AG04450 (cell line): ENCODE measurements at regions of chr4 and their contacts with region 1.

Region 1: GRCh38 chr4:119628308-119629141 is at the start of gene PDE5A:
- DNase-seq: peak; percentile 63
- H3K4me3 ChIP-seq: peak within 1 kb of the TSS; percentile 85
- H3K27ac ChIP-seq: peak within 1 kb of the TSS; percentile 94
- H3K27me3 ChIP-seq: no peaks in the 10 kb centered on the region
- CTCF ChIP-seq: peak; percentile 69
- polyA plus RNA-seq, gene PDE5A: 411 and 489 TPM in 2 replicates

Region 2: GRCh38 chr4:119559044-119559647 is 69.4 kb before region 1 on chr4:
- CTCF ChIA-PET with region 1: interaction called, 19 read pairs
- POLR2A ChIA-PET with region 1: interaction called, 3 read pairs
- DNase-seq: no peak
- H3K4me3 ChIP-seq: no peak overlapping the region
- H3K27ac ChIP-seq: no peak overlapping the region
- H3K27me3 ChIP-seq: no peaks in the 10 kb centered on the region
- CTCF ChIP-seq: peak; percentile 45

Region 3: GRCh38 chr4:119652998-119653397 is 24.5 kb after region 1 on chr4:
- CTCF ChIA-PET with region 1: interaction called, 14 read pairs
- POLR2A ChIA-PET with region 1: interaction called, 3 read pairs
- DNase-seq: peak; percentile 70
- H3K4me3 ChIP-seq: no peak overlapping the region
- H3K27ac ChIP-seq: no peak overlapping the region
- H3K27me3 ChIP-seq: no peaks in the 10 kb centered on the region
- CTCF ChIP-seq: no peak

Region 4: DNA sequence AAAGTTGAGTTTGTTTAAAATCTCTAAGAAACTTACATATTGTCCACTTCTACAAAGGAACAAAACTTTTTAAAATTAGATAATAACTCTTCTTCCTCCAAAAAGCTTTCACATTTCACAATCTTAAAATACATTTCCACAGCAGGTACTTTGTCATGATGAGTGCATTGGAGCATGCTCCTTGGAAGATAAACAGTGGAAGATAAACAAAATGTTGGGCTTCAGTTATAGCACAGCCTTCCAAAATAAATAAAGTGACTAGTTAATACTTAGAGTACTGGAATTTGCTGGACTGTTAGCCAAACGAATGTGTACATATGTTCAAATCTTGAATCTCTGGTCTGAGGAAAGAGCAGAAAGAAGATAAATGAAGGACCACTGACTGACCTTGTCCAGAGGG is 55.0 kb after region 1 on chr4:
- CTCF ChIA-PET with region 1: interaction called, 55 read pairs
- POLR2A ChIA-PET with region 1: interaction called, 17 read pairs
- DNase-seq: peak; percentile 72
- H3K4me3 ChIP-seq: no peak overlapping the region
- H3K27ac ChIP-seq: no peak overlapping the region
- H3K27me3 ChIP-seq: no peaks in the 10 kb centered on the region
- CTCF ChIP-seq: no peak

Region 5: DNA sequence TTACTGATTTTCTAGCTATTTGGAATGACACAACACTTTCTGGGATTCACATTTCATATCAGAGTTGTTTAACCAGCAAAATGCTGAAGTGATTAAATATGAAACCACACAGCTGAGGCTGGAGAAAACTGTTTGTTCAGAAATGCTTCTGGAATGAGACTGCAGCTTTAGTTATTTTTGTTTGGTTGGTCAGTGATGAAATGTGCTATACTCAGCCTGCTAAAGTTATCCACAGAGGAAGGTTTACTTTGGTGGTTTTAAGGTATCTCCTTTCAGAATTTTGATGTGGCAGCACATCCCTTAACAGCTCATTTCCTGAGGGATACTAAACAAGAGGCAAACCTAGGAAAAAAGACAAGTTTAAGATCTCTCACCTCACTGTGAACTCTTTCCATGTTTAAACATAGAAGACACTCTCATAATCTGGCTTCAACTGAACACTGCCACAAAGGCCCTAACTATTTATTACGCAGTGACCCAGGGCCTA is 106.7 kb after region 1 on chr4:
- CTCF ChIA-PET with region 1: interaction called, 13 read pairs
- POLR2A ChIA-PET with region 1: interaction called, 60 read pairs
- DNase-seq: peak; percentile 97
- H3K4me3 ChIP-seq: no peak overlapping the region
- H3K27ac ChIP-seq: no peak overlapping the region
- H3K27me3 ChIP-seq: no peaks in the 10 kb centered on the region
- CTCF ChIP-seq: no peak

Region 6: GRCh38 chr4:120049732-120050494 is 421.4 kb after region 1 on chr4:
- CTCF ChIA-PET with region 1: interaction called, 175 read pairs
- POLR2A ChIA-PET with region 1: interaction called, 19 read pairs
- DNase-seq: peak; percentile 78
- H3K4me3 ChIP-seq: peak overlapping the region; percentile 31
- H3K27ac ChIP-seq: peak overlapping the region; percentile 71
- H3K27me3 ChIP-seq: no peaks in the 10 kb centered on the region
- CTCF ChIP-seq: peak; percentile 90